HEK293T (cell line): ENCODE measurements at regions of chr16 and their contacts with region 1.

Region 1: DNA sequence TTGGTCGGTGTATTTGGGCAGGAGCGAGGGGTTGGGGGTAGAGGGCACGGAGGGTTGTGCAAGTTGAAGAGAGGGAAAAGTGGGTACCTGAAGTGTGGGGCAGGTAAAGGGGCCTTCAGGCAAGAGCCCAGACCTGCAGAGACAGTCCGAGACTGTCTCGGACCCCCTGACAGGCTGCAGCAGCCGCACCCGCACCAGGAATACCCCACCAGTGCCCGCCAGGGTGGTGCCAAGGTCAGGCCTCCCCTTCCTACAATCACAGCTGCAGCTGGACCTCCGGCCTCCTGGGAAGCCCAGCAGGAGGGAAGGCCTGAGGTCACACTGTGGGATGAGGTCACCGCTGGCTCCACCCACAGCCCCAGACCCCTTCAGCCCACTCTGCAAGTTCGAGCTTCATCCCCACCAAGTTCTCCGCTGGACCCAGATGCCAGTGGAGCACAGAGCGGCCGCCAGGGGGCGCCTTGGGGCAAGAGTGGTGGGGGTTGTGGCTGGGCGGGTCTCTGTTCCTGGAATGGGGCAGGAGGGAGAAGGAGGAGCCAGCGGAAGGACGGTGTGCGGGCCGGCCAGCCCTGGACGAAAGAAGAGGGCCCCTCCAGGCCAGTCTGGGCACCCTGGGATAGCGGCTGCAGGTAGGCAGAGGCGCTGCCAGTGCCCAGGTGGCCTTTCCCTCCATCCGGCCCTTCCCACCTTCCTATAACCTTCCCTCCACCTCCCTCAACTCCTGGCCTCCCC is at the start of gene HSD3B7:
- DNase-seq: peak; percentile 100

Region 2: GRCh38 chr16:29815793-29816693 is 1168.8 kb before region 1 on chr16 and contains the start of gene PAGR1:
- CTCF ChIA-PET with region 1: interaction called, 15 read pairs
- POLR2A ChIA-PET with region 1: interaction called, 5 read pairs
- DNase-seq: peak; percentile 99

Region 3: GRCh38 chr16:30786936-30787612 is 197.8 kb before region 1 on chr16 and contains the start of gene ZNF629:
- CTCF ChIA-PET with region 1: no interaction called
- POLR2A ChIA-PET with region 1: no interaction called
- DNase-seq: peak; percentile 86

Region 4: DNA sequence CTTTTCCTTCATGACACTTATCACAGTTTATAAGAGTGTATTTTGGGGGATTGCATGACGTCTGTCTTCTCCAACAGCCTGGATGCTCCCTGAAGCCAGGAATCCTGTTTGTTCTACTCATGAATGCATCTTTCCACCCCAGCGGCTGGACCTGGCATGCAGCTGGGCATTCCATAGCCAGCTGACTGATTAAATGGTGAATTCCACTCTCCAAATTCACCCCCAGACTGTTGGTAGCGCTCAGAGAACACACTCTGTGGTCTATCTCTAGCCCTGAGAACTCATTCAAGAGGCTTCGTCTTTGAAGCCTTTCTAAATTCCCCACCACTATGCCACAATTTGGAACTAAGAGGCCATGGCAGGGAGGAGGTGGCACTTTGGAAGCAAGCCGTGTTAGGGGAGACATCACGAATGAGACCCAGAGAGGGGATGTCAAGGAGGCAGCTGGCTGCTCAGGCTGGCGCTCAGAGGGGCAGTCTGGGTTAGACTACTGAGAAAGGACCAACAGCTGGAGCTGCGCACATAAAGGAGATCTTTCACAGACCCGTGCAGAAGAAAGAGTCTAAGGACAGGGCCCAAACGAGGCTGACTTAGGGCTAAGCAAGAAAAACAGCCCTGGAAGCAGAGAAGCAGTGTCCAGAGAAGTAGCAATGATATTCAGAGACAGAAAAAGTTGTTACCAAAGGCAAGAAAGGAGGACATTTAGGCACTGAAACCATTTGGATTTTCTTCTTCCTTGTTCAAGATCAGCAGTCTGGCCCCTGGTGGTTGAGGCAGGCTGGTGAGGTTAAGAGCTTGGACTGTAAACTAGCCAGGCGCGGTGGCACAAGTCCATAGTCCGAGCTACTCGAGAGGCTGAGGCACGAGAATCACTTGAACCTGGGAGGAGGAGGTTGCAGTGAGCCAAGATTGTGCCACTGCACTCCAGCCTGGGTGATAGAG is 155.4 kb before region 1 on chr16:
- CTCF ChIA-PET with region 1: no interaction called
- POLR2A ChIA-PET with region 1: no interaction called
- DNase-seq: no peak

Region 5: GRCh38 chr16:30997887-30998711 is 13.3 kb after region 1 on chr16:
- CTCF ChIA-PET with region 1: interaction called, 20 read pairs
- POLR2A ChIA-PET with region 1: interaction called, 6 read pairs
- DNase-seq: no peak